B cell (primary cell): ENCODE measurements at regions of chr20 and their contacts with region 1.

Region 1: DNA sequence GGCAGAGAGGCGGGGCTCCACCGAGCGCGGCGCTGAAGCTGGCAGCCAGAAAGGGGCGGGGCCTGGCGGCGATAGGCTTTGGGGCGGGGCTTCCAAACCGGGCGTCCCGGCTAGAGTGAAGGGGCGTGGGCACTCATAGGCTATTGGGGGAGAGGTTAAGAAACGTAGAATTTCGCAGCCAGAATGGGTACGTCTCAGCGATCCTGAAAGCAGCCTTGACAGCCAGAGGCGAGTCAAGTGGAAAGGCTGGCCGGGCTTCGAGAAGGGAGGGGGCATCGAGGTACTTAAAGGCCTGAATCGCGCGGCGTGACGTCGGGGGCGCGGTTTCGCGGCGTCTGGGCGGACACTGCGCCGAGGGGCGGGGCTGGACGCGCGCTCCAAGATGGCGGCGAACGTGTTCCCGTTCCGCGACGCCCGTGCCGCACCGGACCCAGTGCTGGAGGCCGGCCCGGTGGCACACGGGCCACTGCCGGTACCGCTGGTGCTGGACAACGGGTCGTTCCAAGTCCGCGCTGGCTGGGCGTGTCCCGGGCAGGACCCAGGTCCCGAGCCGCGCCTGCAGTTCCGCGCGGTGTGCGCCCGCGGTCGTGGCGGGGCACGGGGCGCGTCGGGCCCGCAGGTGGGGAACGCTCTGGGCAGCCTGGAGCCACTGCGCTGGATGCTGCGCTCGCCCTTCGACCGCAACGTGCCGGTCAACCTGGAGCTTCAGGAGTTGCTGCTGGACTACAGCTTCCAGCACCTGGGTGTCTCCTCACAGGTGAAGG is at the start of gene ACTR5:
- DNase-seq: peak; percentile 99
- ATAC-seq: peak; percentile 93
- H3K4me3 ChIP-seq: peak within 1 kb of the TSS; percentile 56 to 82 (median 71)
- H3K4me3 Mint-ChIP-seq: peak within 1 kb of the TSS; percentile 97
- H3K27ac ChIP-seq: peak within 1 kb of the TSS; percentile 80 to 91
- H3K27ac Mint-ChIP-seq: peak within 1 kb of the TSS; percentile 99
- H3K4me1 ChIP-seq: peaks cover 13 to 17% of the 10 kb centered on the region in 2 donors
- H3K4me1 Mint-ChIP-seq: peaks cover 22% of the 10 kb centered on the region
- H3K27me3 ChIP-seq: peaks cover 0 to 4% (median 2%) of the 10 kb centered on the region in 4 experiments
- H3K27me3 Mint-ChIP-seq: peaks cover 6% of the 10 kb centered on the region
- CTCF ChIP-seq: no peak
- total RNA-seq, gene ACTR5: 15.4 and 16.7 TPM in 2 replicates

Region 2: DNA sequence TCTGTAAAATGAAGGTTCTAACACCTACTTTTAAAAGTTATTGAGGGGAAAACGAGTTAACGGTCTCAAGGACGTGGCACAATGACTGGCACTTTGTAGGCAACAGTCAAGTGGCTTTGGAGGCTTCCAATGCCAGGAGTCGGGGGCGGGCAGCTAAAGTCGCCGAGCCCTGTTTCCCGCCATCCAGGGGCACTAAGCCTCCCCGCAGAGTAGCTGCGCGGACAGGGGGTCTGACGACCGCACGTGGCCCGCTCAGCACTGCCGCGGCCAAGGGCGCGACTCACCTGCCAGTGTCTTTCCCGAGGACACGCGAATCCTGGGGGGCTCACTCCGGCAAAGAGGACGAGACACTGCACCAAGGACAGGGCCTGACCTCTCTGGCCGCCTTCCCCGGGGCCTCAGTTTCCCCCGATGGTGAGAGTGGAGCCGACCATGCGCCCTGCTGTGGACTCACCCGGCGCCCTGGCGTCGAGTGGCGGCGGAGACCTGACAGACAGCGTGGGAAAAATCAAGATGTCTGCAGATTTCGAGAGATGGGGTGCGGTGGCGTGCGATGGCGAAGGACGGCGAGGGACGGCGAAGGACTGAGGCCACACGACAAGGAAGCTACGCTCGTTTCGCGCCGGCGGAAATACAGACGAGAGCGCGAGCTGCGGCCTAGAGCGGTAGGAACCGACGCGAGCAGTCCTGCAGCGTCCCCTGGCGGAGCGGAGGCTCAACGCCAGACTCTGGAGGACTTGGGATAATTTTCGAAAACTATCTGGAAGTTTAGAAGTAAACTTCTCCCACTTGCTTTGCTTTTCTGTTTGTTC is 313.3 kb before region 1 on chr20 and contains the start of gene SNHG17:
- CTCF ChIA-PET with region 1: interaction called, 3 read pairs
- POLR2A ChIA-PET with region 1: no interaction called
- intact Hi-C with region 1: loop called (anchors 2 kb)
- DNase-seq: peak; percentile 95
- ATAC-seq: peak; percentile 92
- H3K4me3 ChIP-seq: peak within 1 kb of the TSS; percentile 56 to 96 (median 88)
- H3K4me3 Mint-ChIP-seq: peak within 1 kb of the TSS; percentile 99
- H3K27ac ChIP-seq: peak within 1 kb of the TSS; percentile 72 to 83
- H3K27ac Mint-ChIP-seq: peak within 1 kb of the TSS; percentile 98
- H3K4me1 ChIP-seq: peaks cover 11 to 13% of the 10 kb centered on the region in 2 donors
- H3K4me1 Mint-ChIP-seq: peaks cover 27% of the 10 kb centered on the region
- H3K27me3 ChIP-seq: peaks cover 0 to 3% (median 0%) of the 10 kb centered on the region in 4 experiments
- H3K27me3 Mint-ChIP-seq: peaks cover 12% of the 10 kb centered on the region
- CTCF ChIP-seq: peak; percentile 100
- total RNA-seq, gene SNHG17: 49.6 and 64.3 TPM in 2 replicates

Region 3: GRCh38 chr20:38658879-38659596 is 89.2 kb before region 1 on chr20:
- CTCF ChIA-PET with region 1: interaction called, 12 read pairs
- POLR2A ChIA-PET with region 1: no interaction called
- intact Hi-C with region 1: no loop called
- DNase-seq: peak; percentile 50
- ATAC-seq: peak; percentile 64
- H3K4me3 ChIP-seq: no peak overlapping the region
- H3K4me3 Mint-ChIP-seq: no peak overlapping the region
- H3K27ac ChIP-seq: no peak overlapping the region
- H3K27ac Mint-ChIP-seq: no peak overlapping the region
- H3K4me1 ChIP-seq: no peaks in the 10 kb centered on the region
- H3K4me1 Mint-ChIP-seq: no peaks in the 10 kb centered on the region
- H3K27me3 ChIP-seq: peaks cover 0 to 24% (median 7%) of the 10 kb centered on the region in 4 experiments
- H3K27me3 Mint-ChIP-seq: peaks cover 46% of the 10 kb centered on the region
- CTCF ChIP-seq: peak; percentile 74

Region 4: DNA sequence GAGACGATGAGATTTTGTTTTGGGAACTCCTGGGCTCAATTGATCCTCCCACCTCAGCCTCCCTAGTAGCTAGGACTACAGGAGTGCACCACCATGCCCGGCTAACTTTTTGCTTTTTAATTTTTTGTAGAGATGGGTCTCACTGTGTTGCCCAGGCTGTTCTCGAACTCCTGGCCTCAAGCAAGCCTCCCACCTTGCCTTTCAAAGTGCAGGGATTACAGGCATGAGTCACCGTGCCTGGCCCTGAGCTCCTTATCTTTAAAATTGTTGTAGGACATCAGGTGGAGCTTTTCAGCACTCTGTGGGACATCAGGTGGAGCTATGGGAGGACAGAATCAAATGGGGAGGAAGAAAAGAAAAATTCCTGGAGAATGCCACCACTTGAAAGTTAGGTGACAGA is 12.7 kb after region 1 on chr20:
- CTCF ChIA-PET with region 1: interaction called, 11 read pairs
- POLR2A ChIA-PET with region 1: no interaction called
- intact Hi-C with region 1: no loop called
- DNase-seq: no peak
- ATAC-seq: no peak
- H3K4me3 ChIP-seq: no peak overlapping the region
- H3K4me3 Mint-ChIP-seq: no peak overlapping the region
- H3K27ac ChIP-seq: no peak overlapping the region
- H3K27ac Mint-ChIP-seq: no peak overlapping the region
- H3K4me1 ChIP-seq: no peaks in the 10 kb centered on the region
- H3K4me1 Mint-ChIP-seq: no peaks in the 10 kb centered on the region
- H3K27me3 ChIP-seq: no peaks in the 10 kb centered on the region
- H3K27me3 Mint-ChIP-seq: no peaks in the 10 kb centered on the region
- CTCF ChIP-seq: no peak

Region 5: GRCh38 chr20:38893565-38894090 is 145.3 kb after region 1 on chr20:
- CTCF ChIA-PET with region 1: interaction called, 65 read pairs
- POLR2A ChIA-PET with region 1: interaction called, 7 read pairs
- intact Hi-C with region 1: loop called (anchors 5 kb)
- DNase-seq: peak; percentile 88
- ATAC-seq: peak; percentile 79
- H3K4me3 ChIP-seq: no peak overlapping the region
- H3K4me3 Mint-ChIP-seq: peak overlapping the region; percentile 64
- H3K27ac ChIP-seq: peak overlapping the region; percentile 74 to 78
- H3K27ac Mint-ChIP-seq: peak overlapping the region; percentile 89
- H3K4me1 ChIP-seq: peaks cover 22 to 52% of the 10 kb centered on the region in 2 donors
- H3K4me1 Mint-ChIP-seq: peaks cover 57% of the 10 kb centered on the region
- H3K27me3 ChIP-seq: no peaks in the 10 kb centered on the region
- H3K27me3 Mint-ChIP-seq: no peaks in the 10 kb centered on the region
- CTCF ChIP-seq: peak; percentile 91

Region 6: DNA sequence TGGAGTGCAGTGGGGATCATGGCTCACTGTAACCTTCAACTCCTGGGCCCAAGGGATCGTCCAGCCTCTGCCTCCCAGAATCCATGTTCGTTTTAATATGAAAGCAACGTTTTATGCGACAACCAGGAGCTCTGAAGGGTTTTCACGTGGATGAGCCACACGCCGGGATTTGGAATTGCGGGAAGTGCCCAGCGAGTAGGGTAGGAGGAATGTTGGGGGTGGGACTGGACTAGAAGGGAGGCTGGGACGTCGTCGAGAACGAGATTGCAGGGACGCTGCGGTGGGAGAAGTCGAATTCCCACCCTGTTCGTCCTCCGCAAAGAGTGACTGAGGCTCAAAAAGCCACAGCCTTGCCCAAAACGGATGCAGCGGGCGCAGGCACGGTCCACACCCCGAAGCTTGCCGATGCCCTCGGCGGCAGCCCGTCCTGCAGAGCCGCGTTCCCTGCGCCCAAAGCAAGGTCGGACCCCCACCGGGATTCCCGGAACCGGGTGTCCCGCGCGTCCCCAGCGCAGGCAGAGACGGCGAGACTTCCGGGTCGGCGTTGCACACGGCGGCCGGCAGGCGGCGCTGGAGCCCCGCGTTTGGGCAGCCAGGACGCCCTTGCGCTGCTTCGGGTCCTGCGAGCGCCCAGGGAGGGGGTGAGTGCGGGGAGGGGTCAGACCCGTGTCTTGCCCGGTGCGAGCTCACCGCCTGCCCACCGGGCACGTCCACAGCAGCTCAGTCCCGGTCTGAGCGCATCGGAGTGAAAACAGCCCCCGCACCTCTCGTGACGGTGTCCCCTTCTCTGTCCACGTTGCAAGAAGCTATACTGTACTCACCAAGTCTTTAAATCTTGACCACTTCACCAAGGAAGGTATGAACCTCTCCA is 301.6 kb after region 1 on chr20:
- CTCF ChIA-PET with region 1: interaction called, 4 read pairs
- POLR2A ChIA-PET with region 1: no interaction called
- intact Hi-C with region 1: loop called (anchors 10 kb)
- DNase-seq: peak; percentile 87
- ATAC-seq: peak; percentile 89
- H3K4me3 ChIP-seq: peak overlapping the region; percentile 57 to 86 (median 68)
- H3K4me3 Mint-ChIP-seq: peak overlapping the region; percentile 88
- H3K27ac ChIP-seq: peak overlapping the region in 1 of 2 donors; percentile 67
- H3K27ac Mint-ChIP-seq: peak overlapping the region; percentile 46
- H3K4me1 ChIP-seq: peaks cover 8 to 12% of the 10 kb centered on the region in 2 donors
- H3K4me1 Mint-ChIP-seq: peaks cover 10% of the 10 kb centered on the region
- H3K27me3 ChIP-seq: no peaks in the 10 kb centered on the region
- H3K27me3 Mint-ChIP-seq: peaks cover 10% of the 10 kb centered on the region
- CTCF ChIP-seq: peak; percentile 99